ENCODE measurements at regions of chr11 and their contacts with region 1.

Region 1: DNA sequence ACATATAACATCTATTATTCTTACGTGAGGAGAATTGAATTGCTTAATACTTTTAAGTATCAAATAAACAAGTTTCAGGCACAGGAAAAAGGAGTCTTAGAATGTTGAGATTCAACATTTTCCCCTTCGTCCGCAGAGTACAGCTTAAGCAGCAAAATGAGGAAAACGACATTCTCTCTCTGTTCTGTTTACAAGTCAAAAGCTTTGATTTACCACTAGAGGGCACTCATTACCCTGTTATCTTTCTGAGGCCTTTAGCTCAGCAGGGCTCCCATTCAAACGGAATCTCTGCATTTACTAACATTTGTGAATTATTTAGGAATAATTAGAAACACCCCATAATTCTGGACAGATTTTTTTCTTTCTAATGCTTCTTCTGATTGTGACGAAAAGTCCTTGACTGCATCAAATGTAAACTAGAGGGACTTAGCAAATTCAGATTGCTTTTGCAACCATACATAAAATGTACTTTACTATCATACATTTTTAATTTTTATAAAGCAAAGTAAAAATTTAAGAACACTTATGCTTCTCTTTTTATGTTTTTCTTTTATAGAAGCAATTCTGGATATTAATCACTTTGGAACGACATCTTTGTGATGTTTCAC is 75.0 kb downstream of the JRKL start:
- DNase-seq: no peak
- ATAC-seq: peak; percentile 57
- H3K4me3 Mint-ChIP-seq: peak overlapping the region; percentile 63; the same call in 1 of the 2 replicates
- H3K27ac Mint-ChIP-seq: no peak overlapping the region
- H3K4me1 Mint-ChIP-seq: peaks cover 30% of the 10 kb centered on the region
- H3K27me3 Mint-ChIP-seq: peaks cover 2% of the 10 kb centered on the region; the same call in 1 of the 2 replicates
- CTCF ChIP-seq: peak; percentile 57

Region 2: DNA sequence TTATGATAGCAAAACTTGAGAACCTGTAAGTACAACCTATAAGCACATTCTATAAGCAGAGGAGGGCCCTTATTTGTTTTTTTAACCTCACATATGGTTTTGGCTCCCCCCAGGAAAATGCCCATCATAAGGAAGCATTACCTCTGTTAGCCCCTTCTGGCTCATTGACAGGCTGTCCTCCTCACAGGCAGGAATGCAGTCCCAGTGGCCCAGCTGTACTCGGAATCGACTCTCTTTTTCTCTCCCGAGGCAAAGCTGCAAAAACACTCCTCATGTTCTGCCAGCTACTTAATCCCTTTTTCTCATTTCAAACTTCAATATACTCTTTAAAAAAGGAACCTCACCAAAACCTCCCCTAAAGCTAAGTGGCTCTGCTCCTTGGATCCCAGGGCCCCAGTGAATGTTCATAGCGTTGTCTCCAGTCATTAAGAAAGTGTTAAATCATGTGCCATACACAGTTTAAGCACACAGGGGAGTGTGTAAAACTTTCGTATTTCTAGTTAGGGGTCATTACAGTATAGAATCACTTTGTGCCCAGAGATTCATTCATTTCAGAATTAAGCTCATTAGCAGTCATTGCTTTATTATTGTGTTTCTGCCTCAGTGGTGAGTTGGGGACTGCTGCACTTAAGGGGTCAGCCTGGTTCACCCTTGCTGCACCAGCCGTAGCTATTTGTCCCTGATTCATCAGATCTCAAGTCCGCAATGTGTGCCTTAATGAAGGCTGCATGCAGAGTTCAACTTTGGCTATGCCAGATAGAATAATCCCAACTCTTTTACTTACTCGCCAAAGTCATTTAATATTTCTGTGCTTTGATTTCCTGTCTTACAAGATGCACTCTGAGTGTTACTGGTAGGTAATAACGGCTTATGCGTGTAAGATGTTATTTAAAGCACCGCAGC is 17.3 kb before region 1 on chr11:
- CTCF ChIA-PET with region 1: interaction called, 17 read pairs
- POLR2A ChIA-PET with region 1: no interaction called
- DNase-seq: no peak
- ATAC-seq: no peak
- H3K4me3 Mint-ChIP-seq: no peak overlapping the region
- H3K27ac Mint-ChIP-seq: no peak overlapping the region
- H3K4me1 Mint-ChIP-seq: 0 out of 2 replicates have a peak, but pooled peaks cover 3% of the 10 kb centered on the region
- H3K27me3 Mint-ChIP-seq: no peaks in the 10 kb centered on the region; the same call in 1 of the 2 replicates
- CTCF ChIP-seq: no peak

Region 3: GRCh38 chr11:96680211-96681018 is 215.6 kb after region 1 on chr11:
- CTCF ChIA-PET with region 1: interaction called, 11 read pairs
- POLR2A ChIA-PET with region 1: no interaction called
- DNase-seq: no peak
- ATAC-seq: peak; percentile 24; the same call in 1 of the 2 replicates
- H3K4me3 Mint-ChIP-seq: no peak overlapping the region
- H3K27ac Mint-ChIP-seq: no peak overlapping the region
- H3K4me1 Mint-ChIP-seq: peaks cover 12% of the 10 kb centered on the region
- H3K27me3 Mint-ChIP-seq: no peaks in the 10 kb centered on the region; the same call in 1 of the 2 replicates
- CTCF ChIP-seq: no peak

Region 4: GRCh38 chr11:96827164-96827563 is 362.4 kb after region 1 on chr11:
- CTCF ChIA-PET with region 1: interaction called, 12 read pairs
- POLR2A ChIA-PET with region 1: no interaction called
- DNase-seq: no peak
- ATAC-seq: peak; percentile 66
- H3K4me3 Mint-ChIP-seq: no peak overlapping the region
- H3K27ac Mint-ChIP-seq: no peak overlapping the region
- H3K4me1 Mint-ChIP-seq: no peaks in the 10 kb centered on the region
- H3K27me3 Mint-ChIP-seq: no peaks in the 10 kb centered on the region; the same call in 1 of the 2 replicates
- CTCF ChIP-seq: no peak

Region 5: DNA sequence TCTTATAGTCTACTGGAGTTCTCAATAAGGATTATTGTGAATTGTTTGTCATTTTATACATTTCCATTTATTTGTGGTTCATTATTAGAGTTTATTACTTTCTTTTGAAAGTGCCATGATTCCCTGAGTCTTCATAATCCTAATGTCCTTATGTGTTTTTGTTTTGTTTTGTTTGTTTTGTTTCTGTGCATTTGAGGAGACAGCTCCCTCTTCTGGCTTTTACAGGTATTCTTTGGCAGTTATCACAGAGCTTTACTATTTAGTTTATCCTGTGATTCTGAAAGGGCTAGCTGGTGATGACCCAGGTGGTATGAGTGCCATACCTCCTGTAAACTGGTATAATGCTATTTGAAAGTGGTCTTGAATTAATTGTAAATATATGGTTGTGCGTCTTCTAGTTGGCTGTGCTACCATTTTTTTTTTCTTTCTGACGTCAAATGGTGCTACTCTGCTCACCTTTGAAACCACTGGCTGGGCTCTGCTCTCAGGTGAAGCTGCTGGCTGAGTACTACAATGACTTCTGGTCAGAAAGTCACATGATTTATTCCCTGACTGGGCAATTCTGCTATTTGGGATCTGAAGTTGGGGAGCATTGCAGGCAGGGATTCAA is 676.2 kb after region 1 on chr11:
- CTCF ChIA-PET with region 1: interaction called, 102 read pairs
- POLR2A ChIA-PET with region 1: interaction called, 3 read pairs
- DNase-seq: no peak
- ATAC-seq: peak; percentile 77
- H3K4me3 Mint-ChIP-seq: no peak overlapping the region
- H3K27ac Mint-ChIP-seq: no peak overlapping the region
- H3K4me1 Mint-ChIP-seq: no peaks in the 10 kb centered on the region
- H3K27me3 Mint-ChIP-seq: no peaks in the 10 kb centered on the region
- CTCF ChIP-seq: peak; percentile 61

Measured in WTC11 (cell line).